WTC11 (cell line): ENCODE measurements at regions of chr16 and their contacts with region 1.

Region 1: GRCh38 chr16:72066747-72067146 is 3.7 kb downstream of the HPR start:
- DNase-seq: no peak
- ATAC-seq: peak; percentile 72
- H3K4me3 Mint-ChIP-seq: no peak overlapping the region
- H3K27ac Mint-ChIP-seq: no peak overlapping the region
- H3K4me1 Mint-ChIP-seq: no peaks in the 10 kb centered on the region
- H3K27me3 Mint-ChIP-seq: peaks cover 3% of the 10 kb centered on the region; the same call in 1 of the 2 replicates
- CTCF ChIP-seq: no peak

Region 2: GRCh38 chr16:71894921-71895678 is 171.6 kb before region 1 on chr16 and contains the start of gene IST1:
- CTCF ChIA-PET with region 1: no interaction called
- POLR2A ChIA-PET with region 1: no interaction called
- DNase-seq: peak; percentile 97
- ATAC-seq: peak; percentile 80
- H3K4me3 Mint-ChIP-seq: peak within 1 kb of the TSS; percentile 98
- H3K27ac Mint-ChIP-seq: peak within 1 kb of the TSS; percentile 97
- H3K4me1 Mint-ChIP-seq: peaks cover 24% of the 10 kb centered on the region
- H3K27me3 Mint-ChIP-seq: no peaks in the 10 kb centered on the region
- CTCF ChIP-seq: no peak
- total RNA-seq, gene IST1: 255 to 272 TPM (median 268 TPM) in 3 replicates

Region 3: GRCh38 chr16:72044825-72045359 is 21.9 kb before region 1 on chr16:
- CTCF ChIA-PET with region 1: no interaction called
- POLR2A ChIA-PET with region 1: no interaction called
- DNase-seq: no peak
- ATAC-seq: no peak
- H3K4me3 Mint-ChIP-seq: no peak overlapping the region
- H3K27ac Mint-ChIP-seq: no peak overlapping the region
- H3K4me1 Mint-ChIP-seq: no peaks in the 10 kb centered on the region
- H3K27me3 Mint-ChIP-seq: peaks cover 7% of the 10 kb centered on the region
- CTCF ChIP-seq: no peak

Region 4: DNA sequence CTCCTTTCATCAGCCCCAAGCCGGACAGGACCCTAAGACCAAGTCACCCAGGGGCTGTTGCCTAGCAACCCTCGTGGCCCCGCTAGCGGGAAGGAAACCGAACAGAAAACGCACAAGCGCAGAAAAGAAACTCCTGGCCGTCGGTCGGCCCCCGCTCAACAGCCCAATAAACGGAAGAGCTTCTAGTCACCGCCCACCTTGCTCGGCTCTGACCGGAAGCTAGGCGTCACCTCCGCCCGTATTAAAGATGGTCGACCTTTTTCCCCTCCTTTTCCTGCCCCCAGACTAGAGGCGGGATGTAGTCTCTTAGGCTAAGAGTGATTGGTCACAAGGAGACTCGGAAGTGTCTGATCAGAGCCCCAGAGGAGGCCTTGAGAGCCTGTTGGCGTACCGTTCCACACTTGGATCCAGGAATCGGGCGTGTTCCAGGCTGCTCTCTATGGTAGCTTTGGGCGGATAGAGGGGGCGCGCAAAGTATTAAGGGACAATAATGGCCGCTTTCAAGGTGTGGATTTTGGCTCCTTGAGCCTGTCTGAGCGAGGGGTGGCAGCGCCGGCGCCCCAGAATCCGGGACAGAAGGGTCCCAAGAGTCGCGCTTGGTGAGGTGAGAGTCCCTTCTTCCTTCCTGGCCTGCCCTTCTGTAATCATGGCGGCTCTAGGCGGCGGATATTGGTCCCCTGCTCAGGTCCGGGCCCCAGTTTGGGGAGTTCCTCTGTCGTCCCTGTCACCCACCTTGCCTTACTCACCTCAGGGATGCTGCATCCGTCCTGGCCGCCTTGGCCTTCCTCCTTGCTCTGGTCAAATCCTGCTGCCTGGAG is 26.9 kb after region 1 on chr16 and contains the starts of genes DHX38 and TXNL4B:
- CTCF ChIA-PET with region 1: interaction called, 16 read pairs
- POLR2A ChIA-PET with region 1: interaction called, 6 read pairs
- DNase-seq: peak; percentile 93
- ATAC-seq: peak; percentile 98
- H3K4me3 Mint-ChIP-seq: peak within 1 kb of the TSS; percentile 99
- H3K27ac Mint-ChIP-seq: peak within 1 kb of the TSS; percentile 96
- H3K4me1 Mint-ChIP-seq: peaks cover 11% of the 10 kb centered on the region
- H3K27me3 Mint-ChIP-seq: no peaks in the 10 kb centered on the region
- CTCF ChIP-seq: no peak
- total RNA-seq, gene DHX38: 62.4 to 91.7 TPM (median 66.5 TPM) in 3 replicates
- total RNA-seq, gene TXNL4B: 8.3 to 9.9 TPM (median 9.0 TPM) in 3 replicates